Activated CD8-positive, alpha-beta T cell treated with anti-CD3 and anti-CD28 coated beads, Interleukin-2, amount 10 ng/mL, durations not matched to agents 7 days and 5 days (primary cell): ENCODE measurements at regions of chr9 and their contacts with region 1.

Region 1: DNA sequence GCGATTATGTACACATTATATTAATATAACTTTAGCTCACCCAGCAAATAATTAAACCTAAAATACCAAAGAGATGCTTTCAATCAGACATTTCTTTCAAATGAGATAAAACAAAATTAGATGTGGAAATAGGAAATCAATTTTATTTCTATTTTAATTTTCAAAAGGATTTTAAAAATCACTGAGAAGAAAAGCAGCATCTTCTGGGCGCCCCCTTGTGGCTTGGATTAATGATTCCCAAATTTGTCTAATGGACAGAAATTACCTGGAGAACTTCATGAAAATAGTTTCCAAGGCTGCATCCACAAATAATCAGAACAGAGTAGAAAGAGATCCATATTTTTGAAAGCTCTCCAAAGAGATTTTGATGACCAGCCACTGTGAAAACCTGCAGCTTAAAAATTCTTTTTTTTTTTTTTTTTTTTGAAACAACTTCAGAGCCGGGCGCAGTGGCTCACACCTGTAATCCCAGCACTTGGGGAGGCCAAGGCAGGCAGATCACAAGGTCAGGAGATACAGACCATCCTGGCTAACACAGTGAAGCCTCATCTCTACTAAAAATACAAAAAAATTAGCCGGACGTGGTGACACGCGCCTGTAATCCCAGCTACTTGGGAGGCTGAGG is 50.9 kb upstream of the CEMIP2 start:
- DNase-seq: peak; percentile 54
- ATAC-seq: no peak
- H3K4me3 Mint-ChIP-seq: no peak overlapping the region
- H3K27ac Mint-ChIP-seq: no peak overlapping the region
- H3K4me1 Mint-ChIP-seq: peaks cover 18% of the 10 kb centered on the region
- H3K27me3 Mint-ChIP-seq: no peaks in the 10 kb centered on the region

Region 2: DNA sequence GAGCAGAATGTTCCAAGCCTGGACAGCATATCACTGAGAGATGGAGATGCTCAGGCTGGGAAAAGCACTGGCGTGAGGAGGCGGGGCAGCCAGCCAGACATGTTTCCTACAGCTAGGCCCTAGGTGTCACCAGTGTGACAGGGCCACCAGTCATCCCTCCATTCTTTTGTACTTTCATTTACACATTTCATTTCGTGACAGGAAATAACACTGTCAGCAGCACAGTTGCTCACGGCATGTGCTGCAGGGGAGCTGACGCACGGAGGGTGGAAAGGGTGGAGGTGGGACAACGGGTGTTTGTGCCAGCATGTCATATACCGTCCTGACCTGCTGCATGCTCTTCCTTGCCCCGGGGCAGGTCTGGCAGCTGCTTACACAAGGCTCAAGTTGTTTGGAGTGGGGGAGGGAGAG is 36.1 kb before region 1 on chr9:
- CTCF ChIA-PET with region 1: interaction called, 20 read pairs
- POLR2A ChIA-PET with region 1: no interaction called
- DNase-seq: peak; percentile 90
- ATAC-seq: peak; percentile 96
- H3K4me3 Mint-ChIP-seq: peak overlapping the region; percentile 67
- H3K27ac Mint-ChIP-seq: peak overlapping the region; percentile 99
- H3K4me1 Mint-ChIP-seq: peaks cover 53% of the 10 kb centered on the region
- H3K27me3 Mint-ChIP-seq: no peaks in the 10 kb centered on the region

Region 3: DNA sequence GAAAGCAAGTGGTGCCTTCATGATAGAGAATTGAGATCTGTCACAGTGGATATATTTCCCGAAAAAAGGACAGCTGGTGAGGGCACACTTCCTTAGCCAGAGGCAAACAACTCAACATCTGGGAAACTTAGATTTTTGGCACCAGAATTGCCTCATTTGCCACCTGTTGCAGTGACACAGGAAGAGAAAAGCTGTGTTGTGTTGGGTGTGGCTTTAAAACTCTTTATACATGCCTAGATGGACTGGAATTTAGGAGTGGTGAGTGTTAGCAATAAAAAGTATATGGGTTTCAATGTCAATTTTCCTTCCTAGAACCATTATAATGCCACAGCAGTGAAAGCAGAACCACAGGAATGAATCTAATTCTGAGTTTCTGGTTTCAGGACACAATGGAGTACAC is 11.7 kb after region 1 on chr9:
- CTCF ChIA-PET with region 1: interaction called, 21 read pairs
- POLR2A ChIA-PET with region 1: no interaction called
- DNase-seq: no peak
- ATAC-seq: no peak
- H3K4me3 Mint-ChIP-seq: no peak overlapping the region
- H3K27ac Mint-ChIP-seq: no peak overlapping the region
- H3K4me1 Mint-ChIP-seq: no peaks in the 10 kb centered on the region
- H3K27me3 Mint-ChIP-seq: peaks cover 5% of the 10 kb centered on the region

Region 4: GRCh38 chr9:72022841-72023240 is 203.6 kb after region 1 on chr9:
- CTCF ChIA-PET with region 1: interaction called, 37 read pairs
- POLR2A ChIA-PET with region 1: no interaction called
- DNase-seq: no peak
- ATAC-seq: no peak
- H3K4me3 Mint-ChIP-seq: no peak overlapping the region
- H3K27ac Mint-ChIP-seq: no peak overlapping the region
- H3K4me1 Mint-ChIP-seq: peaks cover 7% of the 10 kb centered on the region
- H3K27me3 Mint-ChIP-seq: no peaks in the 10 kb centered on the region